ENCODE measurements at regions of chr5 and their contacts with region 1.

Region 1: DNA sequence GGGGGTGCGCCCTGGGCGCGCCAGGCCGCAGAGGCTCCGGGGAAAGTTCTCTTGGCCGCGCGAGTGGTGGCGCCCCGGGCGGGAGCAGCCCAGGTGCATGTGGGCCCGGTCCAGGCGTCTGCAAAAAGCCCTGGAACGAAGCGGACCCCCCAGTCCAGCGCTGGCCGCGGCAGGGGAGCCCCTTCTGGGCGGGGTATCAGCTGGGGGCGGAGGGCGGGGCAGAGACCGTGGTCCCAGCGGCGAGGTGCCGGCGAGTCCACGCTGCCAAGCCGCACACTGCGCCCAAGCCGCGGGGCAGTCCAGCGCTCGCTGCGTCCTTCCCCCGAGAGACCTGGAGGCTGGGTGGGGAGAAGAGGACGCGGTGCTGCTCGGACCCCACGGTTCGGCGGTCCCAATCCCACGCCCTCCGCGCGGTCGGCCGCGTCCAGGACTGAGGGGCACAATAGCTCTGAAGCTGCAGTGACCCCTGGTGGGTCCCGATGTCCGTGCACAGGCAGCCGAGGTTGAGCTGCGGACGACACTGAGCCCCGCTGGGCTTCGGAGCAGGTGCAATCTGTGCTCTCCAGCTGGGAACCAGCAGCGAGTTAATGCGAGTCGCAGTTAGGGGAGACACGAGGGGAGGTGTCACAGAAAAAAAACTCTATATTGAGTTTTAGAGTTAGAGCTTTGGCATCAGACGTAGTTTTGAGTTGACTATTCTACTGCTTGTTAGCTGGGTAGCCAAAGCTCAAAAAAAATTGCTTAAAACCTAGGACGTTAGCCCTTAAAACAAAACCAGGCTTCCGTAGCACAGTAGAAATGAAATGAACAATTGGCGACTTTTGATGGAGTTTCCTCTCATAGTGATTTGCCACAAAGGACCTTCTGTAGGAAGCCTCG is 1.1 kb upstream of the EPB41L4A start:
- DNase-seq: peak; percentile 86

Region 2: GRCh38 chr5:111512375-111513130 is 907.7 kb before region 1 on chr5 and contains the start of gene STARD4:
- intact Hi-C with region 1: loop called (anchors 5 kb)
- DNase-seq: peak; percentile 96
- total RNA-seq, gene STARD4: 11.7 TPM

Region 3: DNA sequence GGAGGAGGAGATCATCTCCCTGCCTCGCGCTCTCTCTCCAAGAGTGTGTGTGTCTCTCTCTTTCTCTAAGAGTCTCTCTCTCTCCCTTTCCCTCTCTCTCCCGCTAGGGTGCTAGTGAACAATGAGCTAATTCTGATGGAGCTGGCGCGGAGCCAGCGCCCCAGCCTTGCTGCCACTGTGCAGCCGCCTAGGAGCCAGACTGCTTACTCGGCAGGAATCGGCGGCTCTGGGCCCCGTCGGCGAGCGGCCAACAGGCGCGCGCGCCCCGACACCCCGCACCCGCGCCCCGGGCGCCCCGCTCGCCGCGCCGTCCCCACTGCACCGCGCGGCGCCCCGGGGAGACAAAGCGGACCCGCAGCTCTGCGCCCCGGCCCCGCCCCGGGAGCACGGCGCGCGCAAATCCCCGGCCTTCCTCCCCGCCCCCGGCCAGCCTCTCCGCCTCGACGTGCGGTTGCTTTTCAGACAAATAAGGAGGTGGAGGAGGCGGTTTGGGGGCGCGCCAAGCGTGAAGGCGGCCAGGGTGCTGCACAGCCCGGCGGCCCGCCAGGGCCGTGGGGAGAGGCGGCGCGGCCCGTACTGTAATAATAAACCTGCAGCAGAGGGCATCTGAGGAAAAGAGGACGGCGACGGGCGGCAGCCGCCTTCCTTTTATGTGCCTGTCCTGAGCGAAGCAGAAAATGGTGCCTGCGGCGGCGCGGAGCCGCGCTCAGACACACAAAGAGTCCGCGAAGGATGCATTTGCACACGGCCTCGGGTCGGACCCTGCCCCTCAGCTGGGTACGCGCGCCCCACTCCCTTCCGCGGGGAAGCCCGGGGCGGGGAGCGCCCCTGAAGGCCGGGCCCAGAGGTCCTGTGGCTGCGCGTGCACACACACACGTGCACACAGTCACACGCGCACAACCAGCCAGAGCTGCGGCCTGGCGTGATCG is 662.6 kb before region 1 on chr5:
- intact Hi-C with region 1: loop called (anchors 10 kb)
- DNase-seq: peak; percentile 97

Region 4: DNA sequence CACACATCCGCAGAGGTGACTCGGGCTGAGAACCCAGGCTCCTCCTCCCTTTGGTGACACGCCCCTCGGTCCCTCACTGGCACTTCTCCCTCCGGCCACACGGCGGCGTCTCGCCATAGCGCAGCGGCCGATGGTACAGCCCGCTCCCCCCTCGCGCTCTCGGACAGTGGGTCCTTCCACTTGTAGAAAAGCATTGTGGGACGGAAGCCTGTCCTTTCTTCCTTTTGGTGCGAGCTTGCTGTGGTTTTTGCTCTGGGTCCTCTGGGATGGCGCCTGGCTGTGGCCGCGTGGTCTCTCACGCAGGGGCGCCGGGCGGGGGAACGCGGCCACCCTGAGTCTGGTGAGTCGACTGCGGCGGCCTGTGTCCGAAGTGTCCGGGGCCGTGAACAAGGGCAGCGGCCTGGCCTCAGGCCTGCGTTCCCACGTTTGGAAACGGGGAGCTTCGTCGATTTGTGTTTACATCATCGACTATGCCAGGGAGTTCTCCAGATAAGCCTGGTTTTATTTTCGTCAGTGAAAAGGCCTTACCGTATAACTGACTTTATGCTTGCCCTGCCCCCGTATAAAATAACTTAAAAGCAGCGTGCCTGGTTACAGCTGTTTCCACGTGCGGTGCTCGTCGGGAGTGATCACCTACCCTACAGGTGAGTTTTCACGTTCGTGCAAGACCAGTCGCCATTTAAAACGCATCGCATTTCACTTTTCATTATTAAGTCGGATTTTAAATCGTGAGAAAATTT is 259.4 kb before region 1 on chr5:
- intact Hi-C with region 1: loop called (anchors 5 kb)
- DNase-seq: peak; percentile 96

Region 5: DNA sequence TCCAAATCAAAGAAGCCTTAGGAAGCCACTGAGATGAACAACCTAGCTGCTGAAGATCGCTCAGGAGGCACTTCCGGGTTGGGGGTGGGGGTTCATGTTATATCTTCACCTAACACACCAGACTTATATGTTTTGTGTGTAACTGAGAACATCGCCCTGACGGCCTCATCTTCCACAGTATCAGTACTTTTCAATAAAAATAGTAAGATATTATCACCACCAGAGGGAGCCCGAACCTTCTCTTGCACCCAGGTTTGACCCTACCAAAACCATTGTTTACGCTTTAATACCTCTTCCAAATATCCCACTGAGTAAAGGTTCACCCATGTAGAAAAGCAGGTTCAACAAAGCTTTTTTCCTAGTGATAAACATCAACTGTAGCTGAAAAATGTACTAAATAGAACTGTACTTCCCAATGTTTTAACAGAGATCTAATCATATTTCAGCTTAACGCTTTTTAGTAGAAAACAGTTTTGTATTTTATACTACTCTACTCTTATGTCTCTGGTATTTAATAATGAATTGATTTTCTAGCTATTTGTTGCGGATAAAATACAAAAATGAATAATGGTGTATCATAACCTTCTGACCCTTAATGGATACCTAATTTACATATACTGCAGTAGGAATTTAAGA is 245.1 kb before region 1 on chr5:
- intact Hi-C with region 1: loop called (anchors 1 kb)
- DNase-seq: no peak

Region 6: GRCh38 chr5:112210430-112211005 is 209.7 kb before region 1 on chr5:
- intact Hi-C with region 1: loop called (anchors 1 kb)
- DNase-seq: no peak

Region 7: GRCh38 chr5:112338681-112339337 is 81.4 kb before region 1 on chr5:
- intact Hi-C with region 1: loop called (anchors 2 kb)
- DNase-seq: no peak

Region 8: DNA sequence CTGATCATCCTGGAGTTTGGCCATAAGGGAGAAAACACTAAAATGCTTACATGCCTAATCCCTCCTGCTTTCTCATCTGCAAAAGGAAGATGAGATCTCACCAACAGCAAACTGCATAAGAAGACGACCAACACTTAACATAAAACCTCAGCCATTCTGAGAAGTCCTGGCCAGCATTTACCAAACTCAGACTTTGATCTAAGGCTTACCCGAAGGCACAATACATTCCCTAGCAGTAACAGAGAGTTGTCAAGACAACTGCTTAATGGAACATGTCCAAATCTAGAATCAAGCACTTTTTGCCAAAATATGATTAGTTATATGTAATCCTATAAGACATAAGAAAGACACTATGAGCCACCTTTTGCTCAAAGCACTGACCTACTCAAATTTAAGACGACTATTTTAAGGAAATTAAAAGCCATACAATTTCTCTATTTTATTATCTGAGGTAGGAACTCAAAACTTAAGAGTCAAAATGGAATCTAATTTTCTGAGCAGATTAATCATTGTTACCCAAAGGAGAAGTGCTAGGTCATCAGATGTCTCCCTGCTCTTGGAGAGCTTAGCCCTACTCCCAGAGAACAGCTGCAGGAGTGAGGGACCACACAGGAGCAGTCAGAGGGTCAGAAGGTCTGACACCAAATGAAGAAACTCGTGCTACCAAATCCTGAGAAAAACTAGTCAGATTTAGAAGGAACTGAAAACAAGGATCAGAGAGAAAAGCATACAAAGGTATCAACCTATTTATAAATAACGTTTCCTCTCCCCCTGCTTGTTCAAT is 40.5 kb before region 1 on chr5:
- intact Hi-C with region 1: no loop called
- DNase-seq: no peak

Region 9: DNA sequence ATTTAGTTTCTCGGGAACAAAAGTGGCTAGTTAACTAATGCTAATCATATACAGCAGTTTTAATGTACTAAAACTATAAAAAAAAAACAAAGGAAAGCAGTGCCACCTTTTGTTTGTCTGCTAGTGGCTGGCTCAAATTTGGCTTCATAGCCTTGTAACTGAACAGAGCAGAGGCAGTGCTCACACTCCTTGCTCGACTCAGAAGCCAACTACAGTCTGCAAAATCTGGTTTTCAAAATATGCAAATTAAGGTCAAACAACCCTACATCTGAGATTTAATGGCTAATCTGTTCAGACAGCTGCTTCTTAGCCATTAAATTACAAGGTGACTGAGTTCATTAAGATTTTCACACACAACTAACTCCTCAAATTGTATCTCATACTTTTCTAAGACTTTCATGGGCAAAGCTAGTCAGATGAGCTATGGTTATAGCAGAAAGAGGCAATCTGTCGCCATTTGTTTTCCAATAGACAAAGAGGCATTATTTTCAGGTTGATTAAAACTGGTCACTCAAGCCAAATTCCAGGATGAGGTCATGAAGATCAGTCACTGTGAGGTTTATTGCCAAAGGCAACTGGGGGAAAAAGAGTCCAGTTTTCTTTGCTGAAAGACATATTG is 55.6 kb after region 1 on chr5:
- intact Hi-C with region 1: no loop called
- DNase-seq: no peak

Region 10: DNA sequence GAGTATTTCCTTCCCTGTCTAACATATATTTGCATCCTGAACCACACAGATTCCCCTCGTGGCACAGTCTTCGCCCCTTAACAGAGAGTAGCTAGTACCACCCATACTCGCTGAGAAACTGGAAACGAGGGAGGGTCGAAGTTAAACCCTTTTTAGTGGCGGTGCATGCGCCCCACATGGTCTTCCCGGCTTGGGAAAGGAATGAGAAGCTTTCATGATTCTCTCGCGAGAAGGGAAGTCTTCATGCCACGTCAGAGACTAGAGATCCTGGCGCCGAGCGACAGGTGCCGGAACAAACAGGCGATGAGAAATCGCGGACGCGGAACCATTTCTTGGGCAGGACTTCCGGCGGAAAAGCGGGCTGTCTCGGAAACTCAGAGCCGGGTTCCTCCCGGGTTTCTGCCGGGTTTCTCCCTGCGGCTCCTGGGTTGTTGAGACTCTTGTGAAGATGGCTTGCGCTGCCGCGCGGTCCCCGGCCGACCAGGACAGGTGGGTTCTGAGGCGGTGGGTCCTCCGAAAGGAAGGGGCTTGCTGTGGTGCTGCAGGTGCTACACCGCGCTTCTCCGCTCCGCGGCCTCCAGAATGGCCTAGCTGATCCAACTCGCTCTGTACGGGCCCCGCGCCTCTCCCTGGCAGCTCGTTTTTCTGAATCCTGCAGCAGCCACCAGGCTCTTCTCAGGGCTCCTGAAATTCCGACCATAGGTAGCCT is 440.9 kb after region 1 on chr5 and contains the start of gene SRP19:
- intact Hi-C with region 1: no loop called
- DNase-seq: peak; percentile 98
- total RNA-seq, gene SRP19: 32.4 TPM